ENCODE measurements at regions of chrX and their contacts with region 1.

Region 1: DNA sequence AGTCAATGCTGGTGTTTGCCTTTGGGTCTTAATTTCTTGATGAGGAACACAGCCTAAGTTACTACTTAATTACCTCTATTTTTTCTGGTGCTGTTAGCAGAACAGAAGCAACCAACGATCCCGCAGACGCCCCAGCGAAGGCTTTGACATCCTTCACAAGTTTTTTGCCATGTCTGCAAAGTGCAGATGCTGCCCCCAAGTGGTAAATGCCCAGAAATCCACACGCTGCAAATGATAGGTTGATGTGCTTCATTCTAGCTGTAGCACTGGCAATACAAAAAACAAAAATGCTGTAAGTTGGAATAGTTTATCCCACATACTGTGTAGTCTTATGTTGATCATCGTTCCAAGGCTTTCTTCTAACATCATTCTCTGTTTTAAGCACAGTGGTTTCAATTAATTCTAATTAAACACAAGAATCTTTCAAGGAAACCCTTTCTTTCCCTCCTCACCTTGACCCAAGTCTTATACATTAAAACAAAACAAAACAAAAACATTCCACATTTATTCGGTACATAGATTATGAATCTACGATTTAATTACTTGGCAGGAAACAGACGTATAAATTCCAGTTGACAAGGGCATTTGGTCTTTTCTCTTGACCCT is 1.2 kb downstream of the PNPLA4 start:
- DNase-seq: peak; percentile 72
- H3K4me3 ChIP-seq: no peak overlapping the region
- H3K27ac ChIP-seq: no peak overlapping the region
- H3K4me1 ChIP-seq: no peaks in the 10 kb centered on the region
- H3K27me3 ChIP-seq: no peaks in the 10 kb centered on the region
- CTCF ChIP-seq: peak; percentile 66

Region 2: GRCh38 chrX:6021316-6022091 is 1904.5 kb before region 1 on chrX:
- intact Hi-C with region 1: loop called (anchors 10 kb)
- DNase-seq: peak; percentile 38
- H3K4me3 ChIP-seq: no peak overlapping the region
- H3K27ac ChIP-seq: no peak overlapping the region
- H3K4me1 ChIP-seq: no peaks in the 10 kb centered on the region
- H3K27me3 ChIP-seq: no peaks in the 10 kb centered on the region
- CTCF ChIP-seq: peak; percentile 56

Region 3: DNA sequence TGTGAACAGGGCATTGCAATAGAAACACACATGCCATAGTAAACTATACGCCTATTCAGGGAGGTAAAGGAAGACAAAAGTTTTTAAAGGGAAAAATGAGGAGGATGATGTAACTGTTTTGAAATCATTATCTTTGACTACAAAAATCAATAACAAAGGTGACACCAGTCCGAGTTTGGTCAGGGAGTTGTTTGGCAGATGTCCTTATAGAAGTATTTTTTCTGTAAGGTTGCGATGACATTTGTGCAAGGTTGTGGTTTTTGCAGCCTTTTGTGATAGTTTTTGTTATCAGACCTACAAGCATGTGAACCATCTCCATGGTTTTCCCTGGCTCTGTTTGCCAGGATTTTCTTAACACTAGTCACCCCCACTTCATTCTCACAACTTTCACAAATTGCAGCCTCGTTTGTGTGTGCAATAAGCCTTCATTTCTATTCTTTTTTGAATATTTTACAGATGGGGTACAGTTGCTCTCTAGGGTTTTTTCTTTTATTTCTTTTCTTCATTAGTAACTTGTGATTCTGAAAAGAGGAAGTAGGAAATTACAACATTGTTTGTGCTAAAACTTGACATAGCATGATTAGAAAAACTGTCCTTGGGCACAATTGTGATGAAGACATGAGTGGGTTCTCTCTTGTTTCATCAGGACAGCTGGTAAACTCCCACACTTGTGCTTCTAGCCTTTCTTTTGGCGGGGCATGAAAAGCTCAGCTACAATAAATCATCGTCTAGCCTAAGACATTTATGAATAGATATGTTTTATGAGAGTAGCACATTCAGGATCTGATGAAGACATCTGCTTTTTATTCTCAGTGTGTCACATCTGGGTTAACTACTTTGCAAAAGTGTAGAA is 61.4 kb after region 1 on chrX:
- intact Hi-C with region 1: no loop called
- DNase-seq: no peak
- H3K4me3 ChIP-seq: no peak overlapping the region
- H3K27ac ChIP-seq: no peak overlapping the region
- H3K4me1 ChIP-seq: no peaks in the 10 kb centered on the region
- H3K27me3 ChIP-seq: no peaks in the 10 kb centered on the region
- CTCF ChIP-seq: no peak

Region 4: DNA sequence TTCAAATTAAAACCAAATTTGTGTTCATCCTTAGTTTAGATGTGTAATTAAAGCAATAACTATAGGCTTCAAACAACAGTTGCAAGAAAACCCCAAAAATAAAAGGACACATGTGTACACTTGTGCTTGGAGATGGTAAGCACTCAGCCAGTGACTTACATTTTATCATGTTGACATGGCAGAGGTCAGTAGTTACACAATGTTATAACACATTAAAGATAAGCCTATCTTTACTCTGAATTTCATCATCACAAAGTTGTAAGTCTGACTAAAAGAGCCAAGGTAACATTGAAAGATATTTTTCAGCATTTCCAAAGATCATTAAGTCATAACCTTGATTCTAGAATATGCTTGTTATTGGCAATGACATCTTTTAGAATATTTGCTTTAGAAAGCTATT is 99.7 kb after region 1 on chrX:
- intact Hi-C with region 1: no loop called
- DNase-seq: no peak
- H3K4me3 ChIP-seq: no peak overlapping the region
- H3K27ac ChIP-seq: no peak overlapping the region
- H3K4me1 ChIP-seq: no peaks in the 10 kb centered on the region
- H3K27me3 ChIP-seq: no peaks in the 10 kb centered on the region
- CTCF ChIP-seq: no peak

Region 5: GRCh38 chrX:8447368-8447767 is 521.4 kb after region 1 on chrX:
- intact Hi-C with region 1: no loop called
- DNase-seq: no peak
- H3K4me3 ChIP-seq: no peak overlapping the region
- H3K27ac ChIP-seq: no peak overlapping the region
- H3K4me1 ChIP-seq: no peaks in the 10 kb centered on the region
- H3K27me3 ChIP-seq: no peaks in the 10 kb centered on the region
- CTCF ChIP-seq: no peak

Measured in colonic mucosa (tissue), 4 donors.